AG04450 (cell line): ENCODE measurements at regions of chr12 and their contacts with region 1.

Region 1: GRCh38 chr12:99043319-99043914 is 398.3 kb downstream of the APAF1 start:
- DNase-seq: peak; percentile 38
- H3K4me3 ChIP-seq: no peak overlapping the region
- H3K27ac ChIP-seq: no peak overlapping the region
- H3K27me3 ChIP-seq: no peaks in the 10 kb centered on the region
- CTCF ChIP-seq: peak; percentile 95

Region 2: DNA sequence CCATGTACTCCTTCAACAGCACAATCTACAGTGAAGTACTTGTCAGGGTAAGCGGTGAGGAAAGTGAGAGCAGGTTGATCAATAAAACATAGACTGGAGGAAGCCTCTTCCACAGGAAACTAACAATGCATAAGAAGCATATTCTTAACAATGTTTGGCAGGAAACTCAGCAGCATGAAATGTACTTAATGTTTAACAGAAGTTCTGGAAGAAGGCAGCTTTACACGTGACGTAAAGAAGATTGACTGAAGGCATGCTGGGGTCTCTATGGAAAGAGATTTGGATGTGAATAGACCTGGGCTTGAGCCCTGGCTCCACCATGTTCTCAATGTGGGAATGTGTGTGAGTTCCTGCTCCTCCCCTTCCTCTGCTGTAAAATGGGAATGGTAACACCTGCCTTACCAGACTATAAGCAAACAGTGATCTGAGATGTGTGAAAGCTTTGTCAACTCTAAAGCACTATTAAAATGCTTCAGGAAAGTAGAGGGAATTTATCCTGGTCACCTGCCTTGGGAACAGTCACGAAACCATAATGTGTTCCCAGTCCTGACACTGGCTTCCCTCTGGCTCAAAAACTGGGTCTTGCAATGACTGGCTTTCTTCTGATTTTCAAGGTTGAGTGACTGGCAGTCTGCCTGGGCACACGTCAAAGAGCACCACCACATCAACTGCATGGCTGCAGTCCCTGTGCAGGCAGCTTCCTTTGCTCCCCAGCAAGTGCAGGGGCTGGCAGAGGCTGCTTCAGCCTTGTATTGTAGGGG is 13.7 kb before region 1 on chr12:
- CTCF ChIA-PET with region 1: interaction called, 33 read pairs
- POLR2A ChIA-PET with region 1: no interaction called
- DNase-seq: no peak
- H3K4me3 ChIP-seq: no peak overlapping the region
- H3K27ac ChIP-seq: no peak overlapping the region
- H3K27me3 ChIP-seq: no peaks in the 10 kb centered on the region
- CTCF ChIP-seq: no peak

Region 3: DNA sequence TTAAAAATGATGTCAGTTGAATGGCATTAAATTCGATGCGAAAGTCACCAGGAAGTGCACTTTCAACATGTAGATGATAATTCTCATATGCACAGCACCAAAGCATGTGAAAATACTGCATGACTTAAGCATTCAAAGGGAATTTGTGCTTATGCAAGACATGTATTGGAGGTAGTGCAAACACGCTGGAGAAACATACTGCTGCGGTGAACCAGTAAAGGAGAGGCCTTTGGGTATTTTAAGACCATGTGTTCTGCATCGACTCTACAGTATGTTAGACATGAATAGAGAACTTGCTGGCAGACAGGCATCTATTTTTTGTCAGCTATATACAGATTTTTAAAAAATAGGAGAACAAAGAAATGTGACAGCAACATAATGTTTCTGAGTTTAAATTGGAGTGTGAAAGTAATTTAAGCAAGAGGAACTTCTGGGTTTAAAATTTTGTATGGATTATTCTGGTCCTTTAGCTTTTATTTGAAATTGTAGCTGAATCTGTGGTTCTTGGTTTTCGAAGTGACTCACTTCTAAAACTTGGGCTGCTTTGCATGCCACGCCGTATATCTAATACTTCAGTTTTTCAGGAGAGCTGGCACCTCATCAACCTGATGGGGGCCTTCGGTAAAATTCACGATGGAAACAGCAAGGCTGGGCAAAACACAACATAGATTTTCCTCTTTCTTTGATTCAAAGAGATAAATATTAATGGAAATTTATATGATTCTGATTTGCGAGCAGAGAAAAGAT is 10.4 kb after region 1 on chr12:
- CTCF ChIA-PET with region 1: interaction called, 43 read pairs
- POLR2A ChIA-PET with region 1: no interaction called
- DNase-seq: no peak
- H3K4me3 ChIP-seq: no peak overlapping the region
- H3K27ac ChIP-seq: no peak overlapping the region
- H3K27me3 ChIP-seq: no peaks in the 10 kb centered on the region
- CTCF ChIP-seq: no peak

Region 4: DNA sequence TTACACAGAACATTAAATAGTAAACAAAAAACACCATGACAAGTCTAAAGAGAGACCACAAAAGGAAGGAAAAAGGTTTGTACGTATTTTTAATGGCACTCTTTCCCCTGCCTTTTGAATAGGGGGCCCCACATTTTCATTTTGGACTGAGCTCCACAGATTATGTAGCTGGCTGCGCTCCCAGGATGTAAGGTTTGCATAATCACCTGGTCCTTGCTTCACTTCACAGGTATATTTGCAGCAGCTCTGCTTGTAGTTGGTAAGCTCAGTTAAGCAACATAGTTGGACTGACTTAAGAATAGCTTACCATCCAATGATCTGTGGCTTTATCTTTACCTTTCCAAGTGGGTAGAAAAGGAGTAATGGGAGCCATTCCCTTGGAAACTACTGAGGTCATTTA is 56.4 kb after region 1 on chr12:
- CTCF ChIA-PET with region 1: no interaction called
- POLR2A ChIA-PET with region 1: no interaction called
- DNase-seq: no peak
- H3K4me3 ChIP-seq: no peak overlapping the region
- H3K27ac ChIP-seq: no peak overlapping the region
- H3K27me3 ChIP-seq: no peaks in the 10 kb centered on the region
- CTCF ChIP-seq: no peak

Region 5: DNA sequence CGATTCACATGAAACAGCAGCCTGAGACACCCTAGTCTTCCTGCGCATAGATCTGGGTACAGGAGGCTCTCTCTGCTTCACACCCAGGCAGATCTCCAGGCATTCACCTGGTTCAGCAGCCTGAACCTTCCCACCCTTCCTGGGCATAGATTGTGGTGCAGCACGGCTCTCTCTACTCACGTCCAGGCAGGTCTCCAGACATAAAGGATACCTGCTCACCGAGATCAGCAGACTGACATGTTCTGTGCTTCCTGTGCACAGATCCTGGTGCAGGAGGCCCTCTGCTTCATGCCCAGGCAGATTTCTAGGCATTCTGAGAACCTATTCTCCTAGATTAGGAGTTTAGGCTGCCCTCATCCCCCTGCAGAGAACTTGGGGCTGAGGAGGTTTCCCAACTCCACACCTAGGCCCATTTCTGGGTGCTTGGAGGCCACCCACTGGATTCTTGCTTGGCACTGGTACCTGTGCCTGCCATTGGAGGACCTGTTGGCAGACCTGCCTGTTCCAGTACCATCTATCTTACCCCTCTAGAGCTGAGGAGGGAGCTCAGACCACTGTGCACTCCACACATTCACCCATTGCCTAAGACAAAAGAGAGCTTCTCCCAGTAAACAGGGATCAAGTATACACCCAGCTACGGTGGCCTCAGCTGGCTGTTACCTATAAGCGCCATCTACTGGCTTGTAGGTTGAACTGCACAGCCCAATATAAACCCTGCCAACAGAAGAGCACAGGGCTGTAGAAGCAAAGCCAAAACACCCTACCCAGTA is 576.2 kb after region 1 on chr12:
- CTCF ChIA-PET with region 1: interaction called, 25 read pairs
- POLR2A ChIA-PET with region 1: no interaction called
- DNase-seq: peak; percentile 6
- H3K4me3 ChIP-seq: no peak overlapping the region
- H3K27ac ChIP-seq: no peak overlapping the region
- H3K27me3 ChIP-seq: no peaks in the 10 kb centered on the region
- CTCF ChIP-seq: peak; percentile 72

Region 6: GRCh38 chr12:99658671-99659349 is 615.4 kb after region 1 on chr12:
- CTCF ChIA-PET with region 1: interaction called, 45 read pairs
- POLR2A ChIA-PET with region 1: no interaction called
- DNase-seq: no peak
- H3K4me3 ChIP-seq: no peak overlapping the region
- H3K27ac ChIP-seq: no peak overlapping the region
- H3K27me3 ChIP-seq: no peaks in the 10 kb centered on the region
- CTCF ChIP-seq: 0 out of 2 replicates have a peak, but pooled peaks have one; percentile 20

Region 7: DNA sequence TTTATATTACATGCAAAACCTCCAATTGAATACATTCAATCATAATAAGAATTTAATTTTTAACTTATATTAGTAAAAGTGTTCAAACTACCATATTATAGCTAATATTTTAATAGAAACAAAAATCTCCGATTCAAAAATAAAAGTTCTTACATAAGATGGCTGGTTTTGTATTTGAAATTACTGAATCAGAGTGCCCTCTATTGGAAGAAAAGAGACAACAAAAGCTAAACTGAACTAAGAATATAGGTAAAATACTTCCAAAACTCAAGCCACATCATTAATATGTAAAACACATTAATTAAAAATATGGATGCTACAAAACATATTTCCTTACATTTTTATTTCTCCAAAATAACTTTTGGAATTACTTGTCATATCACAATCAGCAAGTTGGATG is 724.4 kb after region 1 on chr12:
- CTCF ChIA-PET with region 1: interaction called, 32 read pairs
- POLR2A ChIA-PET with region 1: no interaction called
- DNase-seq: no peak
- H3K4me3 ChIP-seq: no peak overlapping the region
- H3K27ac ChIP-seq: no peak overlapping the region
- H3K27me3 ChIP-seq: no peaks in the 10 kb centered on the region
- CTCF ChIP-seq: peak; percentile 50